Endothelial cell of umbilical vein (primary cell): ENCODE measurements at regions of chr7 and their contacts with region 1.

Region 1: GRCh38 chr7:6197801-6198551 is 74.4 kb downstream of the CYTH3 start:
- DNase-seq: no peak
- H3K4me3 ChIP-seq: no peak overlapping the region
- H3K27ac ChIP-seq: no peak overlapping the region
- H3K4me1 ChIP-seq: no peaks in the 10 kb centered on the region
- H3K27me3 ChIP-seq: no peaks in the 10 kb centered on the region
- CTCF ChIP-seq: no peak
- POLR2A ChIP-seq: no peak

Region 2: DNA sequence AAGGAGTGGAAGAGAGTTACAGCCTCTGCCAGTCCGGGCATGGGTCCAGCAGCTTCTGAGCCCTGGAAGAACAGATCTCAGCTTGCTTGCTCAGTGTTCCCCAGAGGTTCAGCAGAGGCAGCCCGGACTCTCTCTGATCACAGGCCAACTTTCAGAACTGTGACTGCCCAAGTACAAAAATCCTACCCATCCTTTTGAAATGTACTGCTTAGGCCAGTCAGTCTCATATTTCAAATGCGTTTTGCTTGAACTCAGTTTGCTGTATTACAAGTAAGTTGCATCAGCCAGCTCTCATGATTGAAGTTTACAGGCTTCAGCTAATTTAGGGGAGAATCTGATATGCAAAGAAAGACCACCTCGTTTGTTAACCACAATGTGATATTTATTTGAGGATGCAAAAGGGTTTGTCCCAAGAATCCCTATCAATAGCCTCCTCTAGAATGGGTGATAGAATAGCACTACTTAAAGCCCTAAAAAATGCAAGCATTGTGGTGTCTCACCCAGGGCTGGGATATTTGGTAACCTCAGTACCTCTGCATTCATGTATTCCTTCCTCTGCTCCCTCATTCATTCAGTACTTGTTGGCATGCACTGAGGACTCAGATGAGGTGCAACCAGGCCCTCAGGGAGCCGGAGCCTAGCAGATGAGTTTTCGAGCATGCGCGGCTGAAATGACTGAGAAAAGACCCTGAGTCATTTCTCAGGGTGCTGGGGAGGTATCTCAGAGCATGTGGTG is 181.9 kb before region 1 on chr7:
- CTCF ChIA-PET with region 1: no interaction called
- POLR2A ChIA-PET with region 1: interaction called, 10 read pairs
- dilution Hi-C with region 1: no loop called
- intact Hi-C with region 1: no loop called
- DNase-seq: no peak
- H3K4me3 ChIP-seq: no peak overlapping the region
- H3K27ac ChIP-seq: no peak overlapping the region
- H3K4me1 ChIP-seq: no peaks in the 10 kb centered on the region
- H3K27me3 ChIP-seq: no peaks in the 10 kb centered on the region
- CTCF ChIP-seq: no peak
- POLR2A ChIP-seq: no peak

Region 3: DNA sequence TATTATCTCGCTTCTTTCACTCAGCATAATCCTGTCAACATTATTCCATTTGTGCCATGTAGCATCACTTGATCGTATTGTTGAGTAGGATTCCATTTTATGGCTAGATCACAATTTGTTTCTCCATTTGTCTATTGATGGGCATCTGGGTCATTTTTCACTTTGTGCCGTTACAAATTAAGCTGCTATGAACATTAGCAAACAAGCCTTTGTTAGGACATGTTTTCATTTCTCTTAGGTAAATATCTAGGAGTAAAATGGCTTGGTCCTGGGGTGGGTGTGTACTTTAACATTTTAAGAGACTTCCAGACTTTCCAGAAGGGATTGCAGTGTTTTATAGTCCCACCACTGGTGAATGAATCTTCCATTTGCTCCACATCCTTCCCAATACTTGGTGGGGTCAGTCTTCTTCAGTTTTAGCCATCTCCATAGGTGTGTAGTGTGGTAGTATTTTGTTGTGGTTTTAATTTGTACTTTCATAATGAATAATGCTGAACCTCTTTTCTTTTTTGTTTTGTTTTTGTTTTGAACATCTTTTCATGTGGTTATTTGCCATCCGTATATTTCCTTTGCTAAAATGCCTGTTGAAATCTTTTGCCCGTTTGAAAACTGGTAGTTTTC is 80.6 kb before region 1 on chr7:
- CTCF ChIA-PET with region 1: no interaction called
- POLR2A ChIA-PET with region 1: no interaction called
- dilution Hi-C with region 1: no loop called
- intact Hi-C with region 1: no loop called
- DNase-seq: no peak
- H3K4me3 ChIP-seq: no peak overlapping the region
- H3K27ac ChIP-seq: no peak overlapping the region
- H3K4me1 ChIP-seq: no peaks in the 10 kb centered on the region
- H3K27me3 ChIP-seq: no peaks in the 10 kb centered on the region
- CTCF ChIP-seq: no peak
- POLR2A ChIP-seq: no peak

Region 4: DNA sequence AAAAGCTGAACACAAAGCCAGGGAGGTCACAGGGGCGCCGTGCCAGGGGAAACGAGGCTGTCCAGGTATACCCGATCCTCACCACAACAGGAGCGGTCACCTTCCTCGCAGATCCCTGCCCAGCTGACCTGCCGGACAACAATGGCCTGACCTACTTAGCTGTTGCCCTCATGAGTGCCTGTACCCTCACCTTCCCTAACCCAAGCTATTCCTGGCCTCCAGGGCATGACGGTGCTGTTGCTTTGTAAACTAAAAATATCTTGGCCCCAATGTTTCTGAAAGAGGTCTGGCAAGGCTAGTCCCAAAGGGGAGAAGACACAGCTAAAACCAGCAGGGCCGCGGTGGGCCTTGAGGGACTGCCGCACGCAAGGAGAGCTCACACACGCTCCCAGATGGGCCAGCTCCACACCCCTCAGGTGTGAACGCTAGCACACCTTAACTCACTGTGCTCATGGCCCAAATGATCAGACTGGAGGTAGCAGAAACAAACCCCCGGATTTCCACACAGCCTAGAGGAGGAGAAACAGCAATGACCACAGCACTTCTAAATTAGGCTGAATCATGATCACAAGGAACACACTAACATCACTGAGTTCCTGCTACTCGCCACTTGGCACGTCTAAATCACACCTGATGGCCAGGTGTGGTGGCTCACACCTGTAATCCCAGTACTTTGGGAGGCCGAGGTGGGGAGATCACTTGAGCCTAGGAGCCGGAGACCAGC is 140.7 kb after region 1 on chr7:
- CTCF ChIA-PET with region 1: no interaction called
- POLR2A ChIA-PET with region 1: no interaction called
- dilution Hi-C with region 1: no loop called
- intact Hi-C with region 1: no loop called
- DNase-seq: no peak
- H3K4me3 ChIP-seq: no peak overlapping the region
- H3K27ac ChIP-seq: no peak overlapping the region
- H3K4me1 ChIP-seq: no peaks in the 10 kb centered on the region
- H3K27me3 ChIP-seq: no peaks in the 10 kb centered on the region
- CTCF ChIP-seq: no peak
- POLR2A ChIP-seq: no peak